ENCODE measurements at regions of chr1 and their contacts with region 1.

Region 1: DNA sequence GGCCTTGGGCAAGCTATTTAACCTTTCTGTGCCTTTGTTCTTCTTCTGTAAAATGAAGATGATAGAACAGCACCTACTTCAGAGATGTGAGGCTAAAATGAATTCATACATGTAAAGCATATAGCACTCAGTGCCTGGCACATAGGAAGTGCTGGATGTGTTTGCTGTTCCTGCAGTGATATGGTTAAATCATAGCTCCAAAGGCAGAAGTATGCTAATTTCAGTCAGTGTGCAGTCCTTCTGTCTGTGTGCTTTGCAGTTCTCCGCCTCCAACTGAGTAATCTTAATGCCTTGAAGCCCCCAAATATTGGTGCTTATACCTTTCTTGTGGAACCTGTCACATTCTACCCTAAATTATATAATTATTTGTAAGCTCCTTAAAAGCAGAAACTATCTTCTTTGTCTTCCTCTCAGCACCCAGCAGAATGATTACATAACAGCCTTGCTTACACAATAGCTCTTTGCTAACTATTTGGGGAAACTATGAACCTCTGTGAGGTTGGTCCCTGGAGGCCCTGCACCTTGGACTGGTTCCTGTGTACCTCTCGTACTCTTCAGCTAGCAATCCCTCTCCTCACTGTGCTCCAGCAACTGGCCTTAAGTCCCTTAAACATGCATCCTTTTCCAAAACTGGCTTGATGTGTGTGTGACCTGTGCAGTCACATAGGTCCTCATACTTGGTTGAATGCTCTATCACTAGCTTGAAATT is 57.0 kb upstream of the CACYBP start:
- DNase-seq: no peak
- ATAC-seq: no peak
- H3K4me3 ChIP-seq: no peak overlapping the region
- H3K27ac ChIP-seq: no peak overlapping the region
- H3K4me1 ChIP-seq: no peaks in the 10 kb centered on the region
- H3K27me3 ChIP-seq: no peaks in the 10 kb centered on the region
- CTCF ChIP-seq: no peak
- EP300 ChIP-seq: 0 out of 4 replicates have a peak, but pooled peaks of 1 of the 2 experiments have one; percentile 17
- POLR2A ChIP-seq: no peak
- RAD21 ChIP-seq: no peak

Region 2: DNA sequence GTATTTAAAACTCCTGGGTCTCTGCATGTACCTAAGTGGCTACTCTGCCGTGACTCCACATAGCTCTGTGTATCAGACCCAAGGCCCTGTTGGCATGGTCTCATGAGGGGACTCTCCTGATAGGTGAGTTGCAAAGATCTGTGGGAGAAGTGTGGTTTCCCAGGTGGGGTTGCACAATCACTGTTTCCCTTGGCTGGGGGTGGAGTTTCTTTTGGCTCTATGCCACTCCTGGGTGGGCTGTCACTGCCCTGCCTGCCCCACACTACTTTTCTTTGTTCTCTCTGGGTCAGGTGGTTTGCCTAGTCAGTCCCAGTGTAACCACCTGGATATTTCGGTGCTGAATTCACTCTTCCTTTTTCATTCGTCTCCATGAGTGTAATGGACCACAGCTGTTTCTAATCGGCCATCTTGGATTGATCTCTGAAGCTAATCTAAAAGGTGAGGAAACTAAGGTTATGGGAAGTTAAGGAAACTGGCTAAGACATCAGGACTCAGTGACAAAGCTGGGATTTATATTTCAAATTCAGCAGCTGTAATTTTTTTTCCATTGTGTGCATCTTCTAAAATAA is 40.1 kb before region 1 on chr1:
- CTCF ChIA-PET with region 1: no interaction called
- POLR2A ChIA-PET with region 1: interaction called, 12 read pairs
- RAD21 ChIA-PET with region 1: interaction called, 3 read pairs
- SMC1A ChIA-PET with region 1: no interaction called
- in situ Hi-C with region 1: no loop called
- intact Hi-C with region 1: no loop called
- DNase-seq: no peak
- ATAC-seq: no peak
- H3K4me3 ChIP-seq: no peak overlapping the region
- H3K27ac ChIP-seq: no peak overlapping the region
- H3K4me1 ChIP-seq: no peaks in the 10 kb centered on the region
- H3K27me3 ChIP-seq: no peaks in the 10 kb centered on the region
- CTCF ChIP-seq: no peak
- EP300 ChIP-seq: no peak
- POLR2A ChIP-seq: no peak
- RAD21 ChIP-seq: no peak

Region 3: GRCh38 chr1:174912264-174912663 is 30.4 kb before region 1 on chr1:
- CTCF ChIA-PET with region 1: interaction called, 3 read pairs
- POLR2A ChIA-PET with region 1: no interaction called
- RAD21 ChIA-PET with region 1: interaction called, 4 read pairs
- SMC1A ChIA-PET with region 1: interaction called, 14 read pairs
- in situ Hi-C with region 1: no loop called
- intact Hi-C with region 1: no loop called
- DNase-seq: peak; percentile 15
- ATAC-seq: peak; percentile 73
- H3K4me3 ChIP-seq: no peak overlapping the region
- H3K27ac ChIP-seq: no peak overlapping the region; the same call in 1 of the 2 replicates
- H3K4me1 ChIP-seq: peaks cover 15% of the 10 kb centered on the region; the same call in 1 of the 2 replicates
- H3K27me3 ChIP-seq: no peaks in the 10 kb centered on the region
- CTCF ChIP-seq: no peak
- EP300 ChIP-seq: no peak; a peak in 1 of 4 replicates
- POLR2A ChIP-seq: no peak
- RAD21 ChIP-seq: no peak